ENCODE measurements at regions of chr5 and their contacts with region 1.

Region 1: GRCh38 chr5:143349177-143349576 is 54.3 kb downstream of the NR3C1 start:
- DNase-seq: no peak
- H3K4me3 ChIP-seq: no peak overlapping the region
- H3K4me3 Mint-ChIP-seq: no peak overlapping the region
- H3K27ac ChIP-seq: peak overlapping the region in 1 of 2 donors; percentile 71
- H3K27ac Mint-ChIP-seq: no peak overlapping the region
- H3K4me1 ChIP-seq: peaks cover 55 to 67% of the 10 kb centered on the region in 2 donors
- H3K4me1 Mint-ChIP-seq: peaks cover 45% of the 10 kb centered on the region
- H3K27me3 ChIP-seq: no peaks in the 10 kb centered on the region
- H3K27me3 Mint-ChIP-seq: peaks cover 0 to 1% (median 0%) of the 10 kb centered on the region in 3 donors
- CTCF ChIP-seq: no peak

Region 2: GRCh38 chr5:143314659-143315058 is 34.5 kb before region 1 on chr5:
- intact Hi-C with region 1: loop called in 1 of 2 experiments (anchors 5 kb)
- DNase-seq: peak; percentile 8 to 58 (median 37)
- H3K4me3 ChIP-seq: no peak overlapping the region
- H3K4me3 Mint-ChIP-seq: no peak overlapping the region
- H3K27ac ChIP-seq: peak overlapping the region in 1 of 2 donors; percentile 34
- H3K27ac Mint-ChIP-seq: peak overlapping the region in 5 of 7 donors; percentile 9 to 80 (median 27)
- H3K4me1 ChIP-seq: peaks cover 14 to 20% of the 10 kb centered on the region in 2 donors
- H3K4me1 Mint-ChIP-seq: peaks cover 47% of the 10 kb centered on the region
- H3K27me3 ChIP-seq: no peaks in the 10 kb centered on the region
- H3K27me3 Mint-ChIP-seq: no peaks in the 10 kb centered on the region
- CTCF ChIP-seq: no peak

Region 3: DNA sequence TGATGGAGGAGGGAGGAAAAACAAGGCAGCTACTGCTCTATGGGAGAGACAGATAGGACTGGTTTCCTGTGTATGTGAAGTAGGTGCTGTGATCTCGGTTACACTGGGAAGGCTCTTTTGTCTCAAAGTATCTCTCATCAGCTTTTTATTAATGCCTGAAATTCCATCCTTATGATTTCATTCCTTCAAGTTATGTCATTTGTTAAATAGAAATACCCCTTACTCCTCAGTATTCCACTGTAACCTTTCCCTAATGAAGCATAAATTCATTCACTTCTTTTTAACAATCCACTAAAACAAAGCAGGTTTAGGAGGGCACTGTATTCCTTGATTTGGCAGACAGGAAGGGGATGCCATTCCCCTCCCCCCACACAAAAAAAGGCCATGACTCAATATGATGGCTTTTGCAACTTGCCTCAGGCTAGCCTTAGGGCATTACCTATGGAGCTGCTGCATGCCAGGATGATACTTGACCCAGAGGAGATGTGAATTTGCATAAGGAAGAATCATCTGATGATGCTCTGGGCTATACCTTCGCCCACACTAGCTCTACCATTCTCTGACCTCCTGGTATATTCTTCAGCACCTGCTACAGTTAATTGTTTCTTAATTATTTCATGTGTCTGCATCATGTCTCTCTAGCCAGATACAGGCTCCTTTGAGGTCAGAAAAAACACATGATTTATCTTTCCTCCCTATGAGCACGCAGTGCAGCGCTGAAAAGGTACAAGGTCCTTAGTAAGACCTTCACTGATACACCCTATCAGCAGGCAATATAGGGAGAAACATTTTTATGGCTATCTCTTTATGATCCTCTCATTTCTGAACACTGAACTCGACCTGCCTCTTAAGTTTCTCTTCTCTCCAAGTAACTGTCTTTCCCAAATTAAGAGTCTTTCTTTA is 28.0 kb after region 1 on chr5:
- intact Hi-C with region 1: no loop called
- DNase-seq: no peak
- H3K4me3 ChIP-seq: no peak overlapping the region
- H3K4me3 Mint-ChIP-seq: peak overlapping the region in 1 of 2 donors; percentile 46
- H3K27ac ChIP-seq: peak overlapping the region in 1 of 2 donors; percentile 12
- H3K27ac Mint-ChIP-seq: peak overlapping the region in 2 of 7 donors; percentile 12 to 38
- H3K4me1 ChIP-seq: peaks cover 4 to 11% of the 10 kb centered on the region in 2 donors
- H3K4me1 Mint-ChIP-seq: peaks cover 45% of the 10 kb centered on the region
- H3K27me3 ChIP-seq: no peaks in the 10 kb centered on the region
- H3K27me3 Mint-ChIP-seq: no peaks in the 10 kb centered on the region
- CTCF ChIP-seq: no peak